Activated CD4-positive, alpha-beta memory T cell treated with anti-CD3 and anti-CD28 coated beads for 36 hours (primary cell): ENCODE measurements at regions of chr3 and their contacts with region 1.

Region 1: DNA sequence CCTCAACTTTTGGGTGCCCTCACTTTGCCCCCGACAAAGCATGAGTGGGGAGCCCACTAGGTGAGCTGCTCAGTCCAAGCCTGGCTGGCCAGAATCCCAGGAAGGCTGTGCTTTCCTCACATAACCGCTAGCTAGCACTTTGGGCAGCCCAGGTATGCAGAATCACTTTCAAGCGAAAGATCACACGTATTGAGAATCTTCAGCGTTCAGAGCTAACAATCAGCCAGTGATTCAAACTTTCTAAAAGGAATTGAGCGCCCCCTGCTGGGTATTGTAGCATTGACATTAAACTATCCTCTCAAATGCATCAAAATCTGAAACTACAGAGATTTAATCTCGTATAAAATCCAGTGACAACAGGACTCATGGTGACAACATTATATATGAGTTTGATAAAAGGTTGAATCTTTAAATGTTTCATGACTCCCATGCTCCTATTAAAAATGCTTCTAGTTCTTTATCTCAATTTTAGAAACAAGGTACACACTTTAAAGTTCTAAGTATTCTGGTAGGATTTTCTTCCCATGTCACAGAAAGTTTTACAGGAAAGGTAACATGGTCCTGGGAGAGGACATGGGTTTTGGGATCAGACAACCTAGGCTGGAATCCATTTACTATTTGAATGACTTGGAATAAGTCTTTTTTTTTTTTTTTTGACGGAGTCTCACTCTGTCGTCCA is 11.8 kb downstream of the ANAPC13 start:
- DNase-seq: peak; percentile 79
- H3K4me3 Mint-ChIP-seq: no peak overlapping the region
- H3K27ac Mint-ChIP-seq: no peak overlapping the region
- H3K4me1 Mint-ChIP-seq: no peaks in the 10 kb centered on the region
- H3K27me3 Mint-ChIP-seq: no peaks in the 10 kb centered on the region

Region 2: DNA sequence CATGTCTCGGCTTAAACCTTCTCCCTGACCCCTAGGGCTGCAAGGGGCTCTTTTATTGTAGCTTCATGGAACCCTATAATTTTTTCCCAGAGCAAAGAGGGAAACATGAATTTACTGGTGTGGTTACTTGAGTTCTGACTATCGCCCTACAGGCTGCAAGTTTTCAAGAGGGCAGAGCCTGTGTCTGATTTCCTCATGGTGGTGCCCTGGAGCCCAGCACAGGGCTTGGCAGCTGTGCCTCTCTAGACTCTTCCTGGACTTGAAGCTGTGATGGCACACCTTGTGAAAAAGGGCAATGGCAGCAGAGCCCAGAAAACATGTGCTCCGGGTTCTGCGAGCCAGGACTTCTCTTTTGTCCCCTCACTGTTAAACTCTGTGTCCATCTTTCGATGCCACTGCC is 762.0 kb before region 1 on chr3:
- CTCF ChIA-PET with region 1: no interaction called
- POLR2A ChIA-PET with region 1: no interaction called
- intact Hi-C with region 1: no loop called
- DNase-seq: no peak
- H3K4me3 Mint-ChIP-seq: no peak overlapping the region
- H3K27ac Mint-ChIP-seq: no peak overlapping the region
- H3K4me1 Mint-ChIP-seq: no peaks in the 10 kb centered on the region
- H3K27me3 Mint-ChIP-seq: peaks cover 8% of the 10 kb centered on the region

Region 3: GRCh38 chr3:133927540-133928066 is 546.4 kb before region 1 on chr3:
- CTCF ChIA-PET with region 1: no interaction called
- POLR2A ChIA-PET with region 1: no interaction called
- intact Hi-C with region 1: loop called (anchors 10 kb)
- DNase-seq: peak; percentile 72
- H3K4me3 Mint-ChIP-seq: peak overlapping the region; percentile 38
- H3K27ac Mint-ChIP-seq: no peak overlapping the region
- H3K4me1 Mint-ChIP-seq: peaks cover 6% of the 10 kb centered on the region
- H3K27me3 Mint-ChIP-seq: peaks cover 10% of the 10 kb centered on the region

Region 4: GRCh38 chr3:134197681-134198261 is 276.2 kb before region 1 on chr3:
- CTCF ChIA-PET with region 1: interaction called, 41 read pairs
- POLR2A ChIA-PET with region 1: interaction called, 5 read pairs
- intact Hi-C with region 1: loop called (anchors 1 kb)
- DNase-seq: no peak
- H3K4me3 Mint-ChIP-seq: no peak overlapping the region
- H3K27ac Mint-ChIP-seq: no peak overlapping the region
- H3K4me1 Mint-ChIP-seq: peaks cover 10% of the 10 kb centered on the region
- H3K27me3 Mint-ChIP-seq: no peaks in the 10 kb centered on the region

Region 5: GRCh38 chr3:134260984-134261383 is 213.0 kb before region 1 on chr3:
- CTCF ChIA-PET with region 1: no interaction called
- POLR2A ChIA-PET with region 1: no interaction called
- intact Hi-C with region 1: no loop called
- DNase-seq: no peak
- H3K4me3 Mint-ChIP-seq: no peak overlapping the region
- H3K27ac Mint-ChIP-seq: no peak overlapping the region
- H3K4me1 Mint-ChIP-seq: peaks cover 2% of the 10 kb centered on the region
- H3K27me3 Mint-ChIP-seq: peaks cover 9% of the 10 kb centered on the region

Region 6: GRCh38 chr3:134308350-134308891 is 165.6 kb before region 1 on chr3:
- CTCF ChIA-PET with region 1: interaction called, 176 read pairs
- POLR2A ChIA-PET with region 1: no interaction called
- intact Hi-C with region 1: loop called (anchors 1 kb)
- DNase-seq: peak; percentile 84
- H3K4me3 Mint-ChIP-seq: no peak overlapping the region
- H3K27ac Mint-ChIP-seq: no peak overlapping the region
- H3K4me1 Mint-ChIP-seq: peaks cover 2% of the 10 kb centered on the region
- H3K27me3 Mint-ChIP-seq: peaks cover 36% of the 10 kb centered on the region

Region 7: DNA sequence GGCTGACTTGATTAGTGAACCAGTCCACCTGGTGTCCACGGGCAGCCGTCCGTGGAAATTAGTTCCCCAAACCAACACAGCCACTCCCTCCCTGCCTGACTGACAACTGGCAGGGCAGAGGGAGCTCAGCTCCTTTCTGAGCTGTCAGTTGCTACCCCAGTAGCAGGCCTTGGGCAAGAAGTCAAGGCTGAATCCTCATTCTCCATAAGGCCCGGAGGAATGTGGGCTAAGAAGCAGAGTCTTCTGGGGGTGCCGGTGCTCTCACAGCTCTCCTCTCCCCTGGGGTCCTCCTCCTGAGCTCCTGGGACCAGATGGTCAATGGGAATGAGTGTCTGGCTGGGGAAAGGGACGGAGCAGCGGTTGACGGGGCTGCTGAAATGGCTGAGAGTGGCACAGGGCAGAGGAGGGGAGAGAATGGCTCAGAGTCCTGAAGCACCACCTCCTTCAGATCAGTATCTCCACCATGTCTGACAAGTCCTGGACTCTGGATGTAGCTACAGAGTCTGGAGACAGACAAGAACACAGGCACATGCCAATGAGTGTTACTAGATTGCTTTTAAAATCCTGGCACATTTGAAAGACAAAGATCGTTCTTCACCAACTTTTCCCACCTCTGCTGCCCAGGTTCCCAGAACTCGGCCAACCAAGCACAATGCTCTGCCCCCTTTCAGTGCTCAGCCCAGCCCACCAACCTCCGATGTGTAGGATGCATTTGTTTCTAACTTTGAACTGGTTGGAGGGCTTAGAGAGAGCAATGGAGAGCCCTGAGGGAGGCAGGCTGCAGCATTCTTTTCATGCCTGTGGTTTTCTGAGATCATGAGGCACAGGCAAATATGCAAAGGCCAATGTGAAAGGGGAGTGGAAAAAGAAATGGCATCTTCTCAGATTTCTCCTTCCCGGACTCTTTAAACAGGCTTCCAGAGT is 116.5 kb before region 1 on chr3:
- CTCF ChIA-PET with region 1: interaction called, 17 read pairs
- POLR2A ChIA-PET with region 1: no interaction called
- intact Hi-C with region 1: loop called (anchors 5 kb)
- DNase-seq: no peak
- H3K4me3 Mint-ChIP-seq: no peak overlapping the region
- H3K27ac Mint-ChIP-seq: no peak overlapping the region
- H3K4me1 Mint-ChIP-seq: no peaks in the 10 kb centered on the region
- H3K27me3 Mint-ChIP-seq: no peaks in the 10 kb centered on the region

Region 8: DNA sequence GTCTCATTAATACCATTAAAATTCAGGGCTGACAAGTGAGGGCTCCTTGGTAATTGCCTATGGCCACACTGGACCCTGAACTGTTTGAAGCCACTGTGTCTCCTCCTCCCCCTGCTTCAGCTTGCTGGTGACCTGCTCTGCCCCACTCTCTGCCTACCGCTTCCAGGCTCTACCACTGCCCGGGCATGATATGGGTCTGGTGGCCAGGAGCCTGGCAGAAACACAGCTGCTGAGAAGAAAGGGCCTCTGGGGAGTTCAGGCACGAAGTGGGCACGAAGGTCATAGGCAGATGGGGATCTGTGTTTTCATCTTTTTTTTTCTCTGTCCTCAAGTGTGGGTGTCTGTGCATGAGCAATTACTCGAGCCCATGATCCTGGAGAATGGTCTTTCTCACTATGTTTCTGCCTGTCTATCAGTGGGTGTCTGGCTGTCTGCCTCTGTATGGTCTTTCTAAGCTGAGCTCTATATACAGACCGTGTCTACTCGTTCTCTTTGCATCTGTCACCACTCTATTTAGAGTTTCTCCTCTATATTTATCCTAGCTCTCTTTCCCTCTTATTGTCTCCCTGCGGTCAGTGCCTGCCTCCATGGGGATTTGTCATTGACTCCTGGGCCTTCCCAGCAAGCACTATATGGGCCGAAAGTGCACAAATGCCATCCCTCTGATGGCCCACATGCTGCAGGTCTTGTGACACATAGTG is 278.9 kb after region 1 on chr3:
- CTCF ChIA-PET with region 1: no interaction called
- POLR2A ChIA-PET with region 1: no interaction called
- intact Hi-C with region 1: no loop called
- DNase-seq: no peak
- H3K4me3 Mint-ChIP-seq: no peak overlapping the region
- H3K27ac Mint-ChIP-seq: no peak overlapping the region
- H3K4me1 Mint-ChIP-seq: no peaks in the 10 kb centered on the region
- H3K27me3 Mint-ChIP-seq: peaks cover 4% of the 10 kb centered on the region